ENCODE measurements at regions of chr6 and their contacts with region 1.

Region 1: GRCh38 chr6:42217519-42218367 is at the start of gene MRPS10:
- DNase-seq: peak; percentile 95
- ATAC-seq: peak; percentile 99
- H3K4me3 Mint-ChIP-seq: peak within 1 kb of the TSS; percentile 100
- H3K27ac Mint-ChIP-seq: peak within 1 kb of the TSS; percentile 95
- H3K4me1 Mint-ChIP-seq: peaks cover 32% of the 10 kb centered on the region
- H3K27me3 Mint-ChIP-seq: no peaks in the 10 kb centered on the region
- total RNA-seq, gene MRPS10: 35.2 to 36.2 TPM

Region 2: DNA sequence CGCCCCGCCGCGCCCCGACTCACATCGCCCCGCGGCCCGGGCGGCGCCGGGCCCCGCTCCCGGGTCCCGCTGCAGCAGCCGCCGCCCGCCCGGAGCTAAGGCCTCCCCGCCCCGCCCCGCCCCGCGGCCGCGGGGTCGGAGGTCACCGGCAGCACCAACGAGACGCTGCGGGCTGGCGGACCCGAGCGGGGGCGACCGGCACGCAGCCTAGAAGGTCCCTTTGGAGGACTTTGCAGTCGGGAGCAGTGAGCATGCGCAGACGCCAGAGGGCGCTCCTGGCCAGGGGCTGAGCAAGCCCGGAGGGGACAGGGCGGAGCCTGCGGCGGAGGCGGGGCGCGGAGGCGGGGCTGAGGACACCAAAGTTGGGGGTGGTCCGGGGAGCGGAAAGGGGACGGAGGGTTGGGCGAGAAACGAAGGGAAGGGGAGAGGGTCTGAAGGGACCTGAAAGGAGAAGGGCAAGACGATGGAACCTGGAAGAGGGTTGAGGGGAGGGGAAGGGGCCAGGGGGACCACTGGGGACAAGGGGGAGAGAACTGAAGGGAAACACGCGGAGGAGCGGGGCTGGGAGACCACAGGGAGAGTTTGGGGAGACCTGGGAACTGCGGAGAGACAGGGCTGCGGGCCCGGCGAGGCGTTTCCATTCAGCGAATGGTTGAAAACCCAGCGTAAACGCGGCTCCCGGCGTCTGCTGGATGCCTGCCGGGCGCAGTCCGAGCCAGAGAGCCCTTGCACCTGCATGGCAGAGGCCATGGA is 437.8 kb before region 1 on chr6 and contains the start of gene FRS3:
- CTCF ChIA-PET with region 1: interaction called, 3 read pairs
- POLR2A ChIA-PET with region 1: no interaction called
- intact Hi-C with region 1: loop called (anchors 1 to 5 kb)
- DNase-seq: peak; percentile 100
- ATAC-seq: peak; percentile 98
- H3K4me3 Mint-ChIP-seq: peak within 1 kb of the TSS; percentile 85
- H3K27ac Mint-ChIP-seq: peak within 1 kb of the TSS; percentile 75
- H3K4me1 Mint-ChIP-seq: peaks cover 18% of the 10 kb centered on the region
- H3K27me3 Mint-ChIP-seq: peaks cover 7% of the 10 kb centered on the region
- total RNA-seq, gene FRS3: 4.8 to 5.6 TPM

Region 3: GRCh38 chr6:42075159-42075838 is 142.4 kb before region 1 on chr6:
- CTCF ChIA-PET with region 1: interaction called, 3 read pairs
- POLR2A ChIA-PET with region 1: no interaction called
- intact Hi-C with region 1: loop called (anchors 1 to 5 kb)
- DNase-seq: peak; percentile 82
- ATAC-seq: peak; percentile 63
- H3K4me3 Mint-ChIP-seq: no peak overlapping the region
- H3K27ac Mint-ChIP-seq: no peak overlapping the region
- H3K4me1 Mint-ChIP-seq: peaks cover 3% of the 10 kb centered on the region
- H3K27me3 Mint-ChIP-seq: no peaks in the 10 kb centered on the region

Region 4: GRCh38 chr6:42390228-42390934 is 172.6 kb after region 1 on chr6:
- CTCF ChIA-PET with region 1: no interaction called
- POLR2A ChIA-PET with region 1: interaction called, 13 read pairs
- intact Hi-C with region 1: no loop called
- DNase-seq: peak; percentile 85
- ATAC-seq: peak; percentile 89
- H3K4me3 Mint-ChIP-seq: peak overlapping the region; percentile 63
- H3K27ac Mint-ChIP-seq: peak overlapping the region; percentile 97
- H3K4me1 Mint-ChIP-seq: peaks cover 98% of the 10 kb centered on the region
- H3K27me3 Mint-ChIP-seq: no peaks in the 10 kb centered on the region

Region 5: GRCh38 chr6:42563697-42564505 is 346.2 kb after region 1 on chr6 and contains the start of gene UBR2:
- CTCF ChIA-PET with region 1: interaction called, 9 read pairs
- POLR2A ChIA-PET with region 1: no interaction called
- intact Hi-C with region 1: loop called (anchors 1 kb)
- DNase-seq: peak; percentile 97
- ATAC-seq: peak; percentile 97
- H3K4me3 Mint-ChIP-seq: peak within 1 kb of the TSS; percentile 97
- H3K27ac Mint-ChIP-seq: peak within 1 kb of the TSS; percentile 95
- H3K4me1 Mint-ChIP-seq: peaks cover 31% of the 10 kb centered on the region
- H3K27me3 Mint-ChIP-seq: no peaks in the 10 kb centered on the region
- total RNA-seq, gene UBR2: 23.9 to 28.1 TPM

Region 6: DNA sequence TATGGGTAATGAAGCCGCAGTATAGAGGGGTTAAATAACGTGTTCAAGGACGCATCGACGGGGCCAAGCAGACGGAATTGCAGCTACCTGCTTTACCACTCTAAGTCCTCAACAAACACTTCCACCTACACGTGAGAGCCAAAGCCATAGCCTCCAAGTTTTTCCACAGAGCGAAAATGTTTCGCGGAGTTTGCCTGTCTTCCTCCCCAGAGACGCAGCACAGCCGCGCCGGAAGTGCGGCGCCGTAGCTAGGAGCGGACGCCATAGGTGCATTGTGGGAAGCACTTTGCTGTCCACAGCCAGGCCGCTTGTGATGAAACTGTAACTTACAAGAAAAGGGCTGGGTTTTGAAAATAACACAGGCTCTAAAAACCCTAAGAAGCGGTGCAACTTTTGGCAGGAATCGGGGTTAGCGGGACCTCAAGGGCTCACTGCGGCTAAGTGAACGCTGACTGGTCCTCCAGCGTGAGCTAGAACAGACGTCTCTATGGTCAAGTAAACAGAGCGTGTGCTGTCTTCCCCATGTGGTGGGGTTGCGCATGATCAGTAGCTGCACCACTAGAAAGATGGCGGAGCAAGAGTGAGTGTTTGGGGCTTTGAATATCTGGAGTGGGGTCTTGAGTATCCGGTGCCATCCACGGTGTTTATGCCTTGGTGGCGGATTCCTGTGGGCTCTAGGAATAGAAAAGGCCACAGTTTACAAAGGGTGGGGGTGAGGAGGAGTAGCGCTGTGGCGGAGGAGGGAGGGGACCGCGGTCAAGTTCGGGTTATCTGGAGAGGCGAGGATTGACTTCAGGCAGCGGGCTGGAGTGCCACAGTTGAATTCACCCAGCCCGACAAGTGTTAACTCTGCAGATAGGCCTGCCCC is 661.9 kb after region 1 on chr6 and contains the start of gene RPL7L1:
- CTCF ChIA-PET with region 1: no interaction called
- POLR2A ChIA-PET with region 1: no interaction called
- intact Hi-C with region 1: loop called in 1 of 2 experiments (anchors 5 kb)
- DNase-seq: peak; percentile 89
- ATAC-seq: peak; percentile 96
- H3K4me3 Mint-ChIP-seq: peak within 1 kb of the TSS; percentile 99
- H3K27ac Mint-ChIP-seq: peak within 1 kb of the TSS; percentile 100
- H3K4me1 Mint-ChIP-seq: peaks cover 20% of the 10 kb centered on the region
- H3K27me3 Mint-ChIP-seq: no peaks in the 10 kb centered on the region
- total RNA-seq, gene RPL7L1: 124 to 152 TPM